Vagina (tissue), 2 donors: ENCODE measurements at regions of chr10 and their contacts with region 1.

Region 1: GRCh38 chr10:97072851-97073665 is 112.7 kb downstream of the SLIT1 start:
- DNase-seq: no peak
- H3K4me3 ChIP-seq: no peak overlapping the region
- H3K27ac ChIP-seq: no peak overlapping the region
- H3K4me1 ChIP-seq: no peaks in the 10 kb centered on the region
- H3K27me3 ChIP-seq: no peaks in the 10 kb centered on the region
- CTCF ChIP-seq: peak; percentile 66 to 82 (median 79)
- POLR2A ChIP-seq: no peak

Region 2: DNA sequence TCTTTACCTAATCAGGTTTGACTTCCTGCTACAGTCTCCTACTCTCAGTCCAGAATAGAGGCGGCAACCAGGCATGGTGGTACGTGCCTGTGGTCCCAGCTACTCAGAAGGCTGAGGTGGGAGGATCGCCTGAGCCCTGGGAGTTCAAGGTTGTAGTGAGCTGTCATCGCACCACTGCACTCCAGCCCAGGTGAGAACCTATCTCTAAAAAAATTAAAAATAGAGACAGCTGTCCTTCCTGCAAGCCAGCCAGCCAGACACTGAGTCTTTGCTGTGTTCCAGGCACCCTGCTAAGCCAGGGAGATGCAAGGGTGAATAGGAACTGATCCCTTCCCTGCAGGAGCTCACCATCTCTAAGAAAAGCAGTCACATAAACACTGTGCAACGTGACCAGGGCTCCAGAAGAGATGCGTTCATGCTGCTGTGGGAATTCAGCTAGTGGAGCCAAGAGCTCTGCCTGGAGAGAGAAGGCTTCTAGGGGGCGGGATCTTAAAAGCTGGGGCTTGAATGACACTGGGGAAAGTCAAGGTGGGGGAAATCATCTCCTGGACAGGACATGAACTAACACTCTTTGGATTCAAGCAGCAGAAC is 134.8 kb after region 1 on chr10:
- intact Hi-C with region 1: loop called (anchors 5 kb)
- DNase-seq: no peak
- H3K4me3 ChIP-seq: no peak overlapping the region
- H3K27ac ChIP-seq: no peak overlapping the region
- H3K4me1 ChIP-seq: no peaks in the 10 kb centered on the region
- H3K27me3 ChIP-seq: no peaks in the 10 kb centered on the region
- CTCF ChIP-seq: no peak
- POLR2A ChIP-seq: no peak

Region 3: DNA sequence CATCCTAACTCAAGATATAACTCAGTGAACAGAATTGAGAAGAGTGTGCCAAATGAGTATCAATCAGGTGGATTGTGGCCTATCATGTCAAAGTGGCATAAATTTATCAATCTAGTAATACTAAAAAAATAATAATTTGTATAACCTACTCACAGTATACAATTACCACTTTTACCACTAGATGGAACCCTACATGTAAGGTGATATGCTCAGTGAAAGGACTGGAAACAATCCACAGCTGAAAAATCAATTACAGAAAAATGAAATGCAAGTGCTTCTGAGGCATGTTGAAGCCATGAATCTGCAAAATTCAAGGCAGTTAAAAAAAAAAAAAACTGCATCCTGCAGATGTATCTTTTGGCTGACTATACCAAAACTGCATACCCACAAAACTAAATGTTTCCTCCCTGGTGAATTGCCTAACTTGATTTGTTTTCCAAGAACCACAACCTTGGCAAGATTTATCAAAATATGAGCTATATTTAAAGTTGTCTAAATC is 205.5 kb after region 1 on chr10:
- intact Hi-C with region 1: no loop called
- DNase-seq: no peak
- H3K4me3 ChIP-seq: no peak overlapping the region
- H3K27ac ChIP-seq: peak overlapping the region; percentile 46
- H3K4me1 ChIP-seq: peaks cover 23% of the 10 kb centered on the region
- H3K27me3 ChIP-seq: no peaks in the 10 kb centered on the region
- CTCF ChIP-seq: peak; percentile 50 to 55 (median 52)
- POLR2A ChIP-seq: no peak